ENCODE measurements at regions of chr5 and their contacts with region 1.

Region 1: DNA sequence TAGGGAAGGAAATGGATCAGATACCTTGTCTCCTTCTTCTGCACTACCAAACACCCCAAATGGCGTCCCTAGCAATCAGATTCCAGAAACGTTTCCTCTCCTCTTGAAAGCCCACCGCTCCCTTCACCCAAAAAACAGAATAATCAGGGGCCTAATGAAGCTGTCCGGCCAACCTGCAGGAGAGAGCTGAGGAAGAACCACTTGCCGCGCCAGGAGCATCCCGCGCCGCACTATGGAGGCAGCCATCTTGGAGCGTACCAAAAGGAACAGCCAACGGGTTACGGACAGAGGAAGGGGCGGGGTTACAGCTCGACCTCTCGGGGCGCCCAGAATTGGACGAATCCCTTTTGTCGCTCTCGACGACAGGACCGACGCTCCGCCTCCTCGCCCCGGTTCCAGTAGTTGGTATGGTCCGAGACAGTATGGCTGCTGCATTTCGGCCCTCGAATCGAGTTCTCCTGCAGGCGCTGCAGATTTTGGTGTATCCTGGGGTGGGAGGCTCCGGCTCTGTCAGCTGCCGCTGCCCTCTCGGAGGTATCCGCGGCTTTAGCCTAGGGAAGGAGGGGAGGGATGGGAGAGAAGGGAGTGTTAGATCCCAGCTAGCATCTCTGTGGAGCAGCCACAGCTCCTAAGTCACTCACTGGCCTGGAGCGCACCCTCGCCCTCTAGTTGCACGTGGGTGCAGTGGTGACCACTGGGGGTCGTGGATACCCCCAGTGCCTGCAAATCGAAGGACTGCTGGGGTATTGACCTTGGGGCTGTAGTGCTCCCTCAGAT is at the starts of genes MRPS27 and PTCD2:
- DNase-seq: peak; percentile 90 to 97 (median 96)
- ATAC-seq: peak; percentile 100
- H3K4me3 ChIP-seq: peak within 1 kb of the TSS; percentile 37 to 93 (median 55)
- H3K27ac ChIP-seq: peak within 1 kb of the TSS; percentile 29 to 62 (median 50)
- H3K4me1 ChIP-seq: peaks cover 0 to 13% (median 0%) of the 10 kb centered on the region in 3 donors
- H3K27me3 ChIP-seq: no peaks in the 10 kb centered on the region
- CTCF ChIP-seq: no peak
- total RNA-seq, gene MRPS27: 17.3 to 28.0 (median 23.8) TPM
- total RNA-seq, gene PTCD2: 2.2 to 5.3 (median 2.8) TPM

Region 2: DNA sequence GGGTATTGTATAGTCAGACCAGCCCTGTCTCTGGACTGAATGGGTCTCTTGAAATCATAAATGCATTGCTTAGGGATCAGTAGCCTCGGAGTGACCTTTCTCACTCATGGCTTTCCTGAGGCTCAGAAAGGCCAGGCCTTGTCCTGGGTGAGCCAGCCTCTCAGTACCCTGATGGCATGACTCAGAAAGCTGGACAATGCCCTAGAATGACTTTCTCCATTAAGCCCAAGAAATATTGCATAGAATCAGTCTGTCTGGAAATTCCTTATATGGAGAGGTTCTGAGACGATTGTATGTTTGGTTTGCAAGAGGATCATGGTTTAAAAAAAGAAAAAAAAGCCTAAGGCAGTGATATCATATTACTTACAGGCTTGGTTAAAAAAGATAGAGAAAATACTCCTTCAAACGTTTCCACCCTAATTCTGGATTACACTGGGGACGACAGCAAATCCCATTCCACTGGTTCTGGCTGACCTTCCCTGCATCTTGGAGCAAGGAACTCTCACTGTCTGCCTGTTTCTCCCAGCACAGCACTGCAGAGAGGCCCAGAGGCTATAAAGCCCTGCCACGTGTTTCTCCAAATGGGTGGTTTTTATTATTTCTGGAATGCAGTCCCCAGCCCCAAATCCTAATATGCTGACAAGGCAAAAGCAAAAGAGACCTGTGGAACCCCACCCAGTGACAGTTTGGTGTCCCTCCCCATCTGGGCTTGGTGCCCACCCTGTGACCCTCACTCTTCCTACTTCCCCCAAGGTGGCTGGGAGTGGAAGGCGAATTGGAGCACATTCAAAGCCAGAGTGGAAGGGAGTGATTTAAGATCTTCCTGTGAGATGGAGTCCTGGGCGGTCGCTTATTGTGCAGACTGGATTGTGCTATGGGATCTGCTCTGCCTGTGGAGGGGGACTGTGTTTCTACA is 178.5 kb before region 1 on chr5:
- intact Hi-C with region 1: loop called in 2 of 3 experiments (anchors 10 kb)
- DNase-seq: no peak
- ATAC-seq: peak in 2 of 4 donors; percentile 33 to 41
- H3K4me3 ChIP-seq: no peak overlapping the region
- H3K27ac ChIP-seq: no peak overlapping the region
- H3K4me1 ChIP-seq: peaks cover 0 to 11% (median 7%) of the 10 kb centered on the region in 3 donors
- H3K27me3 ChIP-seq: no peaks in the 10 kb centered on the region
- CTCF ChIP-seq: no peak

Measured in pancreas (tissue), 10 donors.